ENCODE measurements at regions of chr17 and their contacts with region 1.

Region 1: DNA sequence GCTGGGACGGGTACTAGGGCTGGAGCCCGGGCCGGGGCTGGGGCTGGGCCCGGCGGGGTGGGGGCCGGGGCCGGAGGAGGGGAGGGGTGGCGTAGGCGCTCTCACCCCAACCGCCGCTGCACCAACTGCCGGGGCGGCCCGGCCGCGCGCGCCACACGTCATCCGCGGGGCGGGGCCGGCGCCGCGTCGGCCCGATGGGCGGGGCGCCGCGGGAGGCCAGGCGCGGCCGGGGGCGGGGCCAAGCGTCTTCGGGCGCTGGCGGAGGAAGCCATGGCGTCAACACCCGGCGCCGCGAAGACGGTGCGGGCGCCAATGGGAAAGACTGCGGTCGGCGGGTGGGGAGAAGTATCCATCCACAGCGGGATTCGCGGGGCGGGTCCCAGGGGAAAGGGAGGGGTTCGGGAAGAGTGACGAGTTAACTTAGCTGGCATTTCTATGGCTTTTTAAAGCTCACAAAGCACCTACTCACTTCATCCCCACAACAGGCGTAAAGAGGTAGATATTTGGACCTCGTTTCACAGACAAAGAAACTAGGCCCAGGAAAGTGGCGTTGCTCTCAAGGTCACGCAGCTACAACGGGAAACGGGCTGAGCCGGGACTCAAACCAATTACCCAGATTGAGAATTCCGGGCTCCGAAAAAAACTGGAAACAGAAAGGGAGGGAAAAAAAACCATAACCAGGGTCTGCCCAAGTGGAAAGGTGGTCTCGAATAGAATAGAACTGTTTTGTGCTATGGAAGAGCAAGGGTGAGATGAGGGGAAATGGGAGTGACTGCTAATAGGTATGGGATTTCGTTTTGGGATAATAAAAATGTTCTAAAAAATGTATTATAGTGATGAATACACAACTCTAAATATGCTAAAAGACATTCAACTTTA is at the start of gene SPAG9:
- DNase-seq: peak; percentile 81 to 99 (median 93)

Region 2: DNA sequence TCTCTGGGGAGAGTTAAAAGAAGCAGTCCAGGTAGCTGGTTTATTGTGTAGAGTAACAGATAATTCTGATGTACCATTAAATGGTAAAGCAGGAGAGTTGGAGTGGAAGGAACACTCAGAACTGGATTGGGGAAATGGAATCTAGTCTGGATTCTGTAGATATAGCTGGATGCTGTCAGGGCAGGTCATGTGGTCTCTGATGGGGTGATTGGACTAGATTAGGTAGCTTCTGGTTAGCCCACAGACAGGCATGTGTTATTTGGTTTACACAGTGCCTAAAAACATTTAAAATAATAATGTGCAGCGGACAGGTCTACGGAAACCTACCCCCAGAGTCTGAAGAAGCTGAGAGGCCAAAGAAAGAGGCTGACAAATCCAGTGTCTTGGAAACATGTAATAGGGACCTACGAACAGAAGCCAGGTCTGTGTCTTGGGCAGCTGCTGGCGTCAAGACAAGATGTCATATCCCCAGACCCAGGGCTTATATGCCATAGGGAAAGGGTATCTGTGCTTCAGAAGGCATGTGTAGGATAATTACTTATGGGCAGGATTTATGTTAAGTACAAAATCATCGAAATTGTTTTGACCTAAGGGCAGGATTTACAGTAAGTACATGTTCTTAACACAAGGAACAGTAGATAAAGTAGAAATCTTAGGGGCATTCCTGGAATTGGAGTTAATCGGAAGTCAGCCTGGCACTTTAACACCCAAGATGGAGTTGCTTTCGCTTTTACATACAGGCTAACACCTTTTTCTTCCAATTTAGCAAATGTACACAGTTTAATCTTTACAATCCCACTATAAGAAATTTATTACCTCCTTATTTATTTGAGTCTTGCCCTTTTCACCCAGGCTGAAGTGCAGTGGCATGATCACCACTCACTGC is 389.2 kb before region 1 on chr17:
- intact Hi-C with region 1: no loop called
- DNase-seq: no peak

Region 3: GRCh38 chr17:51046514-51047384 is 74.2 kb before region 1 on chr17:
- intact Hi-C with region 1: loop called (anchors 2 kb)
- DNase-seq: peak; percentile 74 to 97 (median 84)

Region 4: DNA sequence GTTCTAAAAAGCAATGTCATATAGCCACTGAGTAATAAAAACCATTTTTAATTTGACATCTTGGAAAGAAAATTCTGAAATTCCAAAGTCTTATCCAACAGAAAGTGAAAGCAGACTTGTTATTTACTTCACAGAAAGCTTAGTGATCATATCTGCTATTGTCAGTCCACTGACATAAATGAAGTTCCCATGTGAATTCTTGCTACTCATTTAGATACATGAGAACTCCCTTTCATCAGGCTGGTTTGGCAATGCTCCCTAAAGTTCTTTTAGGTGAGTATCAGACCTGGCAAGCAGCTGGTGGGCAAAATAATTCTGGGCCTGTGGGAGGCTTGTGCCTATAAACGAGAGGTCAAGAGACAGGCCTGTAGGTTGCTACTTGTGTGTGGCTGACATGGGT is 68.7 kb after region 1 on chr17:
- intact Hi-C with region 1: no loop called
- DNase-seq: no peak

Measured in posterior cingulate gyrus (tissue), 11 donors.